Activated CD4-positive, alpha-beta T cell treated with anti-CD3 and anti-CD28 coated beads, Interleukin-2, amount 10 ng/mL, durations not matched to agents 7 days and 5 days (primary cell): ENCODE measurements at regions of chr1 and their contacts with region 1.

Region 1: DNA sequence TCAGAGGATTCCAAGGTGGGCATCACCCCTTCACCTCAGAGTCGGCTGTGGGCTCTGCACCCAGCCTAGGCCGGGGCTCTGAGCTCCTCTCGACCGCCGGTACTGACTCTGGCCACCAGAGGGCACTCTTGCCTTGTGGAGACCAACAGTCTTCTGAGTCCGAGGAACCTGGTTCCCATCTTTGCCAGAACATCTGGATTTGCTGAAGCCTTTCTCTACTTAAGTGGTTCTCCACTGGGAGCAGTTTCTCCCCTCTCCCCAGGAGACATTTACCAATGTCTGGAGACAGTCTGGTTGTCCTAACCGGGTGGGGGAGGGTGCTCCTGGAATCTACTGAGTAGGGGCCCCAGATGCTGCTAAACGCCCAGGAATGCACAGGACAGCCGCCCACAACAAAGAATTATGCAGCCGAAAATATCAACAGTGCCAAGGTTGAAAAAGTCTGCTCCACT is 9.4 kb downstream of the ETV3L start:
- DNase-seq: peak; percentile 90
- H3K4me3 Mint-ChIP-seq: no peak overlapping the region
- H3K27ac Mint-ChIP-seq: no peak overlapping the region
- H3K4me1 Mint-ChIP-seq: no peaks in the 10 kb centered on the region
- H3K27me3 Mint-ChIP-seq: peaks cover 3% of the 10 kb centered on the region

Region 2: GRCh38 chr1:156961709-156962108 is 128.5 kb before region 1 on chr1:
- CTCF ChIA-PET with region 1: no interaction called
- POLR2A ChIA-PET with region 1: no interaction called
- DNase-seq: peak; percentile 61
- H3K4me3 Mint-ChIP-seq: peak overlapping the region; percentile 59
- H3K27ac Mint-ChIP-seq: peak overlapping the region; percentile 58
- H3K4me1 Mint-ChIP-seq: peaks cover 50% of the 10 kb centered on the region
- H3K27me3 Mint-ChIP-seq: peaks cover 13% of the 10 kb centered on the region

Region 3: DNA sequence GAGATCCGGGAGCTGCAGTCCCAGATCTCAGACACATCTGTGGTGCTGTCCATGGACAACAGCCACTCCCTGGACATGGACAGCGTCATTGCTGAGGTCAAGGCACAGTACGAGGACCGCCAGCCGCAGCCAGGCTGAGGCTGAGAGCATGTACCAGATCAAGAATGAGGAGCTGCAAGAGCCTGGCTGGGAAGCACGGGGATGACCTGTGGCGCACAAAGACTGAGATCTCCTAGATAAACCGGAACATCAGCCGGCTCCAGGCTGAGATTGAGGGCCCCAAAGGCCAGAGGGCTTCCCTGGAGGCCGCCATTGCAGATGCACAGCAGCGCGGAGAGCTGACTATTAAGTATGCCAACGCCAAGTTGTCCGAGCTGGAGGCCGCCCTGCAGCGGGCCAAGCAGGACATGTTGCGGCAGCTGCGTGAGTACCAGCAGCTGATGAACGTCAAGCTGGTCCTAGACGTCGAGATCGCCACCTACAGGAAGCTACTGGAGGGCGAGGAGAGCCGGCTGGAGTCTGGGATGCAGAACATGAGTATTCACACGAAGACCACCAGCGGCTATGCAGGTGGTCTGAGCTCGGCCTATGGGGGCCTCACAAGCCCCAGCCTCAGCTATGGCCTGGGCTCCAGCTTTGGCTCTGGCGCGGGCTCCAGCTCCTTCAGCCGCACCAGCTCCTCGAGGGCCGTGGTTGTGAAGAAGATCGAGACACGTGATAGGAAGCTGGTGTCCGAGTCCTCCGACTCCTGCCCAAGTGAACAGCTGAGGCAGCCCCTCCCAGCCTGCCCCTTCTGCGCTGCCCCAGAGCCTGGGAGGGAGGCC is 16.1 kb before region 1 on chr1:
- CTCF ChIA-PET with region 1: interaction called, 10 read pairs
- POLR2A ChIA-PET with region 1: no interaction called
- DNase-seq: peak; percentile 40
- H3K4me3 Mint-ChIP-seq: no peak overlapping the region
- H3K27ac Mint-ChIP-seq: no peak overlapping the region
- H3K4me1 Mint-ChIP-seq: peaks cover 2% of the 10 kb centered on the region
- H3K27me3 Mint-ChIP-seq: peaks cover 26% of the 10 kb centered on the region

Region 4: GRCh38 chr1:157105988-157106812 is 16.0 kb after region 1 on chr1:
- CTCF ChIA-PET with region 1: interaction called, 19 read pairs
- POLR2A ChIA-PET with region 1: no interaction called
- DNase-seq: no peak
- H3K4me3 Mint-ChIP-seq: no peak overlapping the region
- H3K27ac Mint-ChIP-seq: no peak overlapping the region
- H3K4me1 Mint-ChIP-seq: peaks cover 4% of the 10 kb centered on the region
- H3K27me3 Mint-ChIP-seq: peaks cover 47% of the 10 kb centered on the region

Region 5: GRCh38 chr1:157138220-157139051 is 48.2 kb after region 1 on chr1 and contains the start of gene ETV3:
- CTCF ChIA-PET with region 1: interaction called, 14 read pairs
- POLR2A ChIA-PET with region 1: no interaction called
- DNase-seq: peak; percentile 92
- H3K4me3 Mint-ChIP-seq: peak within 1 kb of the TSS; percentile 94
- H3K27ac Mint-ChIP-seq: peak within 1 kb of the TSS; percentile 91
- H3K4me1 Mint-ChIP-seq: peaks cover 51% of the 10 kb centered on the region
- H3K27me3 Mint-ChIP-seq: peaks cover 3% of the 10 kb centered on the region
- total RNA-seq, gene ETV3: 33.3 to 37.5 TPM

Region 6: DNA sequence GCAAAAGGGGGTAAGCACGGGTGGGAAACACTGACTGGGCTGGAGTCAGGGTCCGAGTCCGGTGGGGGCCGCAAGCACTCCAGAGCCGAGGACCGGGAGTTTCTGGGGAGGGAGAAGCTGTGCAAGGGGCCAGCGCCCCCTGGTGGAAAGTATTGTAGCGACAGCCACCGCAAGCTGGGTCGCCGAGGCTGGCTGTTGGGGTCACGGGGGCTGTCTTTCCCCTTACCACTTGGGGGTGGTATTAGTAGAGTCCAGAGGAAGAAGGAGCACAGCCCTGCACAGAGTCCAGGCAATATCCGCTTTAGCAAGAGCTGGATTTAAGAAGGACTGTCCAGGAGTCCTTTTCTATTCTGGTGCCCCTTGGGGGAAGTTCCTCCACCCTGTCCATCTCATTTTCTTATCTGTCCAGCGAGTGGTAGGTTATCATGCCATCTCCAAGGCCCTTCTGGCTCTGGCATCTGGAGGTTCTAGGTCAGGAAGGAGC is 65.9 kb after region 1 on chr1:
- CTCF ChIA-PET with region 1: interaction called, 176 read pairs
- POLR2A ChIA-PET with region 1: interaction called, 5 read pairs
- DNase-seq: peak; percentile 81
- H3K4me3 Mint-ChIP-seq: no peak overlapping the region
- H3K27ac Mint-ChIP-seq: peak overlapping the region; percentile 68
- H3K4me1 Mint-ChIP-seq: peaks cover 19% of the 10 kb centered on the region
- H3K27me3 Mint-ChIP-seq: peaks cover 22% of the 10 kb centered on the region

Region 7: DNA sequence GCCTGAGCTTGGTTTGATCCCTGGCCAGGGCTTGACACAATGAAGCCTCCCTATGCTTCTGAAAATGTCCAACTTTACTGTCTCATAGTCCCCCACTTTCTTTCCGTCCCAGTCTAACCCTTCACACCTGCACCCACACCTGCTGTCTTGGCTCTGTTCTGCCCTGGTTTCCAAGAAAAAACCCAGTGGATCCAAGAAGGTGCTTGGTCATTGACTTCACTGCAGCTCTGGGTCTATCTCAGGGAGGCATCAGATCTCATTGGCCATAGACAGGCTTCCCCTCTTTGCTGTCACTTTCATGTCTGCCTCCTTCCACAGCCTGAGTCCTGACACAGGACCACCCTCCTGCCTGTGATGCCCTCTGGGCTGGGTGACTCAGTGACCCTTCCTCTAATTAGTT is 85.8 kb after region 1 on chr1:
- CTCF ChIA-PET with region 1: interaction called, 11 read pairs
- POLR2A ChIA-PET with region 1: no interaction called
- DNase-seq: no peak
- H3K4me3 Mint-ChIP-seq: no peak overlapping the region
- H3K27ac Mint-ChIP-seq: no peak overlapping the region
- H3K4me1 Mint-ChIP-seq: no peaks in the 10 kb centered on the region
- H3K27me3 Mint-ChIP-seq: peaks cover 36% of the 10 kb centered on the region

Region 8: GRCh38 chr1:157307491-157307890 is 217.3 kb after region 1 on chr1:
- CTCF ChIA-PET with region 1: no interaction called
- POLR2A ChIA-PET with region 1: no interaction called
- DNase-seq: no peak
- H3K4me3 Mint-ChIP-seq: no peak overlapping the region
- H3K27ac Mint-ChIP-seq: no peak overlapping the region
- H3K4me1 Mint-ChIP-seq: no peaks in the 10 kb centered on the region
- H3K27me3 Mint-ChIP-seq: peaks cover 11% of the 10 kb centered on the region